Panc1 (cell line): ENCODE measurements at regions of chr12 and their contacts with region 1.

Region 1: DNA sequence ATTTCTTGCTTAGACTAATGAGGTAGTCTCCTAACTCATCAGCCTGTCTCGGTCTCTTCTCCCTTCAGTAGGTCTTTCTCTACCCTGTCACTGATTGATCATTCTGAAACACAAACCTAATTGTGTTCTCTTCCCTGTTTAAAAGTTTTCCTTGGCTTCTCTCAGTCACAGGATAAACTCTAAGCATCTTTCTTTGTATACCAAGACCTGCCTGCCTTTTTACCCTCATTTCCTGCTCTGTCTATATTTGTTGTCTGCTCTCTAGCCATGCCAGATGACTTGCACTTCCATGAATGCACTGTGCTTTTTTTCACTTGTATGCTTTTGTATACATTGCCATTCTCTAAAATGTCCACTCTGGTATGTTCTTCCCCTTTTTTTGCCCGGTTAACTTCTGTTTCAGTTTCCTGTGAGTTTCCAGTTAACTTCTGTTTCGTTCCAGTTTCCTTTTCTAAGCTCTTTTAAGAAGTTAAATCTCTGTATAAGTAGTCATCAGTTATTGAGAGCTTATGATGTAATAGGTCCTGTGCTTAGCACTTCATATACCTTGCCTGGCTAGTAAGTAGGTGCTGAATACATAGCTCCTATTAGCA is 12.8 kb downstream of the DIP2B start:
- DNase-seq: no peak
- ATAC-seq: peak; percentile 43; the same call in 1 of the 2 replicates
- H3K4me3 ChIP-seq: no peak overlapping the region
- H3K27ac ChIP-seq: peak overlapping the region; percentile 49
- H3K4me1 ChIP-seq: peaks cover 12% of the 10 kb centered on the region
- H3K27me3 ChIP-seq: no peaks in the 10 kb centered on the region
- CTCF ChIP-seq: no peak

Region 2: DNA sequence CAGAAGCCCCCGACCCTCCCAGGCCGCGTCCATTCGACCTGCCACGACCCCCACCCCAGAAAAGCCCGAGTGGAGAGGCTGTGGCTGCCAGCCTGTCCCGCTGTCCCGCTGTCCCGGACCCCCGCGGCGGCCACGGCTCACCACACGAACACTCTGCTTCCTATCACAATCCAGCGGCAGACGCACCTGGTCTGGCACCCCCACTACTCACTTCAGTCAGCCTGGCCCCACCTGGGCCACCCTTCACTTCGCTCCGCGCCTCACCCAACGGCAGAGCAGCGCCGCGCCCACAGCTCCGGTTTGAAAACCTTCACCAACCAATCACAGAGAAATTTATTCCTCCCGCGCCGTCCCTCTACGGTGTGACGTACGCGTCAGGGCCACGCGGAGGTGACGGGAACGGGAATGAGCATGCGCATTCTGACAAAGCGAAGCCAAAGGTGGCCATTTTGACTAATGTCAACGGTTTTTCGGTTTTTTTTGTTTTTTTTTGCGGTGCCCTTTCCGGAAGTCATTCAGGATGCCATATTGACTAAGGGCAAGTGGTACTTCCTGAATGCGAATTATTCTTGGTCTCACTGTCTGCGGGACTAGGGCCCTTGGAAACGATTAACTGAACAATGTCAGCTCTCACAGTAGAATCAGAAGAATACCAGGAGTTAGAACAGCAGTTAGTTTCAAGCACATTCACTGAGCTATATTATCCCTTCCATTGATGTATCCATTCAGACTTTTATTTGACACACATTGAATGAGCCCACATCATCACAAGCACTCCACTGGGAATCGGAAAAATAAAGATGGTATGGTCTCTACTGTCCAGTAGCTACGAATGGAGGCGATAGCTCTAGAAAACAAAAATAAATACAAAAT is 492.1 kb before region 1 on chr12 and contains the start of gene RACGAP1:
- CTCF ChIA-PET with region 1: no interaction called
- POLR2A ChIA-PET with region 1: interaction called, 13 read pairs
- in situ Hi-C with region 1: no loop called
- intact Hi-C with region 1: no loop called
- DNase-seq: peak; percentile 98
- ATAC-seq: peak; percentile 99
- H3K4me3 ChIP-seq: peak within 1 kb of the TSS; percentile 71 to 85
- H3K27ac ChIP-seq: peak within 1 kb of the TSS; percentile 99
- H3K4me1 ChIP-seq: peaks cover 33% of the 10 kb centered on the region
- H3K27me3 ChIP-seq: no peaks in the 10 kb centered on the region
- CTCF ChIP-seq: no peak
- total RNA-seq, gene RACGAP1: 147 TPM

Region 3: GRCh38 chr12:50317198-50317597 is 200.4 kb before region 1 on chr12:
- CTCF ChIA-PET with region 1: no interaction called
- POLR2A ChIA-PET with region 1: no interaction called
- in situ Hi-C with region 1: no loop called
- intact Hi-C with region 1: no loop called
- DNase-seq: no peak
- ATAC-seq: no peak
- H3K4me3 ChIP-seq: no peak overlapping the region
- H3K27ac ChIP-seq: no peak overlapping the region
- H3K4me1 ChIP-seq: peaks cover 11% of the 10 kb centered on the region
- H3K27me3 ChIP-seq: no peaks in the 10 kb centered on the region
- CTCF ChIP-seq: no peak

Region 4: DNA sequence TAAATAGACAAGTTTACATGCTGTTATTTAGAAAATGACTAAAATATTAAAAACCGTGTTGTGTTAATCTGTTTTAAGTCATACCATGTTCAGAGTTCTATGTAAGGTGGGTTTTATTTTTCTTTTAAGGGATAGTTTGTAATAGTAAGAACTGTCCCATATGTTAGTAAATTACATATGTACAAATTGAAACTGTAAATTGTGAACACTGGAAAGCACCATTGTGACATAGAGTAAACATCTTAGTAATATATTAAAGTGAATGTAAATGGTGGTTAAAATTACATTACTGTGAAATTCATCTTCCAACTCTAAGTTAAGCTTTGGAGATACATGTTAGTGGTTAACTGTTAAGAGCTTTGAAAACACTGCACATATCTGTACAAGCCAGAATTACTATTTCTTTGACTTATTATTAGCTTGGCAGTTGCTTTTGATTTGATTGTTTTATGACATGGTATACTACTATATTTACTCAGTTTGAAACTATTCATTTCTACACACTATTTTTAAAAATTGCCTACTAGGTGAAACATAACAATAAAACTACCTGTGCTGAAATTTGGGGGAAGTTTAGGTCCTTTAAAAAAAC is 40.2 kb before region 1 on chr12:
- CTCF ChIA-PET with region 1: no interaction called
- POLR2A ChIA-PET with region 1: no interaction called
- in situ Hi-C with region 1: no loop called
- intact Hi-C with region 1: no loop called
- DNase-seq: no peak
- ATAC-seq: no peak
- H3K4me3 ChIP-seq: no peak overlapping the region
- H3K27ac ChIP-seq: no peak overlapping the region
- H3K4me1 ChIP-seq: no peaks in the 10 kb centered on the region
- H3K27me3 ChIP-seq: no peaks in the 10 kb centered on the region
- CTCF ChIP-seq: no peak

Region 5: DNA sequence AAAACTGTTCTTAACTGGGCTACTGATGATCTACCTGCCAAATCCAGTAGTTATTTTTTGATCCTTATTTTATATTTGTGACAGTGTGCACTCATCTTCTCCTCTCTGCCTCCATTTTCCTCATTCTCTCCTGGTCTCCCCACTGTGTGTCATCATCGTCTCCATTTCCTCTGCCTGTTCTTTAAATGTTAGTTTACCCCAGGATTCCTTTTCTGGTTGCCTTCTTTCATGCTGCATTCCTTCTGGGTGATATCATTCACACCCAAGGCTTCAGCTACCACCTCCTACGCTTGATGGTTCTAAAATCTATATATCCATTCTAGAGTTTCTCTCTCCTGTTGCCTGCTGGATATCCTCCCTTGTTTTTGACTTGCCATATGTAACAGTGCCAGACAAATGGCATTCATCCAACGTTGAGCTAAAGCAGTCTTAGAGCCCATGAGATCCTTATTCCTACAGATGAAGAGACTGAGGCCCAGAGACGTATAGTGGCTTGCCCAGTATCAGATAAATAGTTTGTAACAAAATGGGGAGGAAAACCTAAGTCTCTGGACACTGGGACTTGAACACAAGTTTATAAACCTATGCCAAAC is 96.7 kb after region 1 on chr12:
- CTCF ChIA-PET with region 1: no interaction called
- POLR2A ChIA-PET with region 1: no interaction called
- in situ Hi-C with region 1: no loop called
- intact Hi-C with region 1: no loop called
- DNase-seq: no peak
- ATAC-seq: peak; percentile 36; the same call in 1 of the 2 replicates
- H3K4me3 ChIP-seq: no peak overlapping the region
- H3K27ac ChIP-seq: peak overlapping the region; percentile 64
- H3K4me1 ChIP-seq: peaks cover 51% of the 10 kb centered on the region
- H3K27me3 ChIP-seq: no peaks in the 10 kb centered on the region
- CTCF ChIP-seq: no peak